Mammary epithelial cell (primary cell): ENCODE measurements at regions of chr10 and their contacts with region 1.

Region 1: GRCh38 chr10:11036407-11037011 is 18.8 kb downstream of the CELF2 start:
- DNase-seq: peak; percentile 19
- H3K4me3 ChIP-seq: no peak overlapping the region
- H3K27ac ChIP-seq: no peak overlapping the region
- H3K4me1 ChIP-seq: peaks cover 4% of the 10 kb centered on the region
- H3K27me3 ChIP-seq: no peaks in the 10 kb centered on the region
- CTCF ChIP-seq: peak; percentile 49 to 65

Region 2: GRCh38 chr10:9331583-9332008 is 1704.9 kb before region 1 on chr10:
- CTCF ChIA-PET with region 1: no interaction called
- dilution Hi-C with region 1: no loop called
- in situ Hi-C with region 1: loop called (anchors 25 kb)
- intact Hi-C with region 1: no loop called
- DNase-seq: peak; percentile 18
- H3K4me3 ChIP-seq: no peak overlapping the region
- H3K27ac ChIP-seq: no peak overlapping the region
- H3K4me1 ChIP-seq: no peaks in the 10 kb centered on the region
- H3K27me3 ChIP-seq: no peaks in the 10 kb centered on the region
- CTCF ChIP-seq: peak; percentile 68 to 79

Region 3: GRCh38 chr10:10233229-10233628 is 803.3 kb before region 1 on chr10:
- CTCF ChIA-PET with region 1: no interaction called
- dilution Hi-C with region 1: no loop called
- in situ Hi-C with region 1: no loop called
- intact Hi-C with region 1: loop called (anchors 2 kb)
- DNase-seq: no peak
- H3K4me3 ChIP-seq: no peak overlapping the region
- H3K27ac ChIP-seq: no peak overlapping the region
- H3K4me1 ChIP-seq: no peaks in the 10 kb centered on the region
- H3K27me3 ChIP-seq: no peaks in the 10 kb centered on the region
- CTCF ChIP-seq: no peak

Region 4: GRCh38 chr10:10891124-10892082 is 145.1 kb before region 1 on chr10:
- CTCF ChIA-PET with region 1: no interaction called
- dilution Hi-C with region 1: no loop called
- in situ Hi-C with region 1: no loop called
- intact Hi-C with region 1: loop called (anchors 2 kb)
- DNase-seq: no peak
- H3K4me3 ChIP-seq: no peak overlapping the region
- H3K27ac ChIP-seq: no peak overlapping the region
- H3K4me1 ChIP-seq: no peaks in the 10 kb centered on the region
- H3K27me3 ChIP-seq: no peaks in the 10 kb centered on the region
- CTCF ChIP-seq: no peak

Region 5: DNA sequence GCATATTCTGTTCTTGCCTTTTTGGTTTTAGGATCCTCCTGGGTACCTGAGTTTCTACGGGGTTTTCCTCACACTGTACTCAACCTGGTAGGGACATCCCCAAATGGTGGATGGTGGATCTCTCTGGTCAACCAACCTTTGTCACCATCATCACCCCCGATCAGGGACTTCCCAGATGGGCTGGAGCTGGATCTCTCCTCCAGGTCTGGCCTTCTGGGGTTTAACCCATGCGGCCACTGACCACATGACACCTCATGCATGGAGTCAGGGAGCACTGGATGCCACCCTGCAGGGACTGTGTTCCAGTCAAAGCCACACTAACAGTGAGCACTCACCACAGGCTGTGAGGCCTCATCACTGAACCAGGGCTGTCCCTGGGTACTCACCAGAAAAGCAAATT is 61.2 kb after region 1 on chr10:
- CTCF ChIA-PET with region 1: no interaction called
- dilution Hi-C with region 1: no loop called
- in situ Hi-C with region 1: no loop called
- intact Hi-C with region 1: no loop called
- DNase-seq: no peak
- H3K4me3 ChIP-seq: no peak overlapping the region
- H3K27ac ChIP-seq: no peak overlapping the region
- H3K4me1 ChIP-seq: no peaks in the 10 kb centered on the region
- H3K27me3 ChIP-seq: no peaks in the 10 kb centered on the region
- CTCF ChIP-seq: no peak

Region 6: DNA sequence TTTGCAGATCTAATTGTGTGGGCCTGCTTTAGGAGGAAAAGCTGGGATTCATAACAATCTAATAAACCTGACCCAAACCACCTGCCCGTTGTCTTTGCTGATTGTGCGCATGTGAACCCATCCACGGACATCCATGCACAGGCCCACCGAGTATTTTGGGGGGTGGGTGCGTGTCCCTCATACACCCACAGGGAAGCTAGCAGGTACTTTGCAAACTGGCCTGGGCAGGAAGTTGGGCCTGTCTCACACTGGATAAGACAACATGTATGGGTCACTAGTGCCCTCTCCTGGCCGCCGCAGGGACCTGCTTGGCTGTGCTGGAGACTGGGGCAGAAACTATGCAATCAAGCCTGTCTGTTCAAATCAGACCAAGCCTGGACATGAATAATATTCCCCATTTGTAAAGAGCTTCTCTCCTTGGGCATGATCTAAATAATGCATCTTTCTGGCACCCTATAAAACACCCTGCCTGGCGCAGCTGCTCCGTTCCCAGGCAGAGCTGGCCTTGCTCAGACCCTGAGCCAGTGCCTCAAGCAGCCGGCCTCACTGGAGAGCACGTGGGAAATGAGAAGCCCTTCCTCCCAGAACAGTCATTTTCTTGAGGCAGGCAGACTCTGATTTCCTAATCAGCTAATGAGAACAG is 721.4 kb after region 1 on chr10:
- CTCF ChIA-PET with region 1: no interaction called
- dilution Hi-C with region 1: no loop called
- in situ Hi-C with region 1: no loop called
- intact Hi-C with region 1: loop called (anchors 5 kb)
- DNase-seq: peak; percentile 91
- H3K4me3 ChIP-seq: no peak overlapping the region
- H3K27ac ChIP-seq: peak overlapping the region; percentile 62
- H3K4me1 ChIP-seq: peaks cover 21% of the 10 kb centered on the region
- H3K27me3 ChIP-seq: no peaks in the 10 kb centered on the region
- CTCF ChIP-seq: peak; percentile 97 to 99